ENCODE measurements at regions of chr6 and their contacts with region 1.

Region 1: DNA sequence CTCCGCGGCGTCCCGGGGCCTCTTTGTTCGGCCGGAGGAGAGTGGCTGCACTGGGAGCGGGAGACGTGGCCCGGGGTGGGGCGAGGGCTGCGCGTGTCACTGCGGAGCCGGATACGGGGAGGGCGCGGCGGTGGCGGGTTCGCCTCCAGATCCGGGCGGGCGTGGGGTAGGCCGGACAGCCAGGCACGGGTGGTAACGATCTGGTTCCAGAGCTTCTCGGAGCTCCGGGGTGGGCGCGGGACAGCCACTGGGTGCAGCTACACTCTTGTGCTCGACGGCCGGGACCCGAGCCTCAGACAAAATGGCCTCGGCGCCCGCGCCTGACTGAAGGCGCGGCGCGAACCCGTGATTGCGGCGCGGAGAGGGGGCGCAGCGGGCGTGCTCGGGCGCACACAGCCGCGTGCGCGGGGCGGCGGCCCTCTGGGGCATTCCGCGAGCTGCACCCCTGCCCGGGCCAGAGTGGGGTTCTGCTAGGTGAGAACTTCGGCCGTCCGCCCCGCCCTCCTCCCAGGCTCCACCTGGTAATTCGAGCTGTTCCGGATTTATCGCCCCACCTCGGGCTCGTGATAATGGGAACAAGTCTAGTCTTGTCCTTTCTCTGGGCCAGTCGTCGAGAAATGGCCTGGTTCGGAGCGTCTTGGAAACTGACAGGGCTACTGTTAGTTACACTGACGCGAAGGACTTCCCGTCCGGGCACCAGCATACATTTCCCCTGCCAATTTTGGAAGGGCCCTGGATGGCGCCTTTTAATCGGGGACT is 1.0 kb downstream of the LOC128125822 start:
- DNase-seq: peak; percentile 70
- H3K4me3 ChIP-seq: peak overlapping the region; percentile 72 to 95
- H3K27ac ChIP-seq: peak overlapping the region; percentile 89 to 98
- H3K4me1 ChIP-seq: peaks cover 0 to 5% of the 10 kb centered on the region in 2 experiments; a peak in 3 of 4 replicates
- H3K27me3 ChIP-seq: no peaks in the 10 kb centered on the region
- CTCF ChIP-seq: no peak
- EP300 ChIP-seq: no peak
- RAD21 ChIP-seq: no peak

Region 2: DNA sequence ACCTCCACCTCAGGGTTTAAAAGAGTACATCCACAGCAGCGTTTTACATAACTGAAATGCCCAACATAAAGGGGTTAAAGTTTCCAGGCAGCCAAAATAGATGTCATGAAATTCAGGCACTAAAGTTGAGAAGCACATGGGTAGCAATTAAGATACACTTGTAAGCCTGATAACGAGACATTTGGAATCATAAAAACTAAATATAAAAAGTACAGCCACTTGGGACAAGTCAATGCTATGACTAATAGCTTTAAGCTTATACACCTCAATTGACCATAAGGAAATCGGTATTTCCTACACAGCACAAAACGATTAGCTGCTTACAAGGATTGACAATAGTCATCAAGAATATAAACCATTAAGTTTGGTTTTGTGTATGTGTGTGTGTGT is 10.8 kb after region 1 on chr6:
- CTCF ChIA-PET with region 1: interaction called, 18 read pairs
- POLR2A ChIA-PET with region 1: no interaction called
- DNase-seq: no peak
- H3K4me3 ChIP-seq: no peak overlapping the region
- H3K27ac ChIP-seq: no peak overlapping the region
- H3K4me1 ChIP-seq: no peaks in the 10 kb centered on the region
- H3K27me3 ChIP-seq: no peaks in the 10 kb centered on the region
- CTCF ChIP-seq: no peak
- EP300 ChIP-seq: no peak
- RAD21 ChIP-seq: no peak

Region 3: DNA sequence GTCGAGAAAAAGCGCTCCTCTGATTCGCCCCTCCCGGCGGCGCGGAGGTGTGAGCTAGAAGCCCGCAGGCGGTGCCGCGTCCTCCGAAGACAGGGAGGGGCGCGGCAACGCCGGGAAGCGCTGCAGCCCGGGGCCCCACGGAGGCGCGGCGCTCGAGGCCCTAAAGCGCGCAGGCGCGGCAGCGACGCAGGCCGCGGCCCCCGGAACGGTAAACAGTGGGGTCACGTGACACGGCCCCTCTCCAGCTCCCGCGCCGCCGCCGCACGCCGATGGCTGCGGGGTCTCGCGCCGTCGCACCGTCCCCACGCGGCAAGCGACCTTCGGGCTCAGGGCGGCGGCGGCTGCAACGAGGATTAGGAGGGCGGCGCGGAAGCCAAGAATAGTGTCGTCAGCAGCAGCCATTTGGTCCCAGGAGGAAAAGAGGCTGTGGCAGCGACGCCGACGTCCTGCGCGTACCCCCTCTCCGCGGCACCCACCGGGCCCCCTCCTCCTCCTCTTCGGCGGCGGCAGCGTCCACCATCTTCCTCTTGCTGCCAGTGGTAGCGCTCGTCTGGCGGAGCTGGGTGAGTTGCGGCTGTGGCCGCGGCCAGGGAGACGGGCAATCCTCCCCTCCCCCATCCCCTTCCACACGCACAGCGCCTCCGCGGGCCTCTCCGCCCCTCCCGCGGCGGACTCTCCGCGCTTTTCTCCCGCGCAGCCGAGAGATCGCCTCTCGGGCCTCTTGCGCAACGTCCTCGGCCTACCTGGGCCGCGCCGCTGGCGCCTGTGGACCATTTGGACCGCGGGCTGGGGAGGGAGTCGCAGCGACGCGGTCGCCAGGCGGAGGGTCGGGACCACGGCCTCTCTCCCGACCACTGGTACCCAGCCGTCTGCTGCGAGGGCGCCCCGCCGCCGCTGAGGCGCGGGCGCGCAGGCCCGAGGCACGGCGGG is 62.5 kb after region 1 on chr6 and contains the start of gene PHF3:
- CTCF ChIA-PET with region 1: interaction called, 7 read pairs
- POLR2A ChIA-PET with region 1: interaction called, 10 read pairs
- DNase-seq: peak; percentile 97
- H3K4me3 ChIP-seq: peak within 1 kb of the TSS; percentile 89 to 96
- H3K27ac ChIP-seq: peak within 1 kb of the TSS; percentile 90 to 97
- H3K4me1 ChIP-seq: peaks cover 11 to 23% of the 10 kb centered on the region in 2 experiments; a peak in 3 of 4 replicates
- H3K27me3 ChIP-seq: no peaks in the 10 kb centered on the region
- CTCF ChIP-seq: peak; percentile 31
- EP300 ChIP-seq: peak in 1 of 2 experiments; percentile 23; a peak in 2 of 4 replicates
- RAD21 ChIP-seq: peak; percentile 32
- polyA plus RNA-seq, gene PHF3: 4.4 and 5.3 TPM in 2 replicates